Activated T-helper 1 cell treated with anti-CD3 and anti-CD28 coated beads, Interleukin-12 subunit alpha, Interleukin-12 subunit beta, Interleukin-2, Interleukin-4 antibody, amounts not matched to agents 30 ng/mL and 10 ng/mL and 1 ng/mL, durations not matched to agents 14 hours and 24 hours and 36 hours (primary cell): ENCODE measurements at regions of chr12 and their contacts with region 1.

Region 1: GRCh38 chr12:96211988-96212387 is 17.8 kb downstream of the ELK3 start:
- DNase-seq: no peak
- H3K4me3 Mint-ChIP-seq: peak overlapping the region; percentile 76
- H3K27ac Mint-ChIP-seq: peak overlapping the region; percentile 76
- H3K4me1 Mint-ChIP-seq: peaks cover 78% of the 10 kb centered on the region
- H3K27me3 Mint-ChIP-seq: no peaks in the 10 kb centered on the region

Region 2: GRCh38 chr12:95918194-95918993 is 293.6 kb before region 1 on chr12:
- intact Hi-C with region 1: loop called (anchors 1 kb)
- DNase-seq: peak; percentile 17
- H3K4me3 Mint-ChIP-seq: no peak overlapping the region
- H3K27ac Mint-ChIP-seq: no peak overlapping the region
- H3K4me1 Mint-ChIP-seq: no peaks in the 10 kb centered on the region
- H3K27me3 Mint-ChIP-seq: peaks cover 20% of the 10 kb centered on the region

Region 3: DNA sequence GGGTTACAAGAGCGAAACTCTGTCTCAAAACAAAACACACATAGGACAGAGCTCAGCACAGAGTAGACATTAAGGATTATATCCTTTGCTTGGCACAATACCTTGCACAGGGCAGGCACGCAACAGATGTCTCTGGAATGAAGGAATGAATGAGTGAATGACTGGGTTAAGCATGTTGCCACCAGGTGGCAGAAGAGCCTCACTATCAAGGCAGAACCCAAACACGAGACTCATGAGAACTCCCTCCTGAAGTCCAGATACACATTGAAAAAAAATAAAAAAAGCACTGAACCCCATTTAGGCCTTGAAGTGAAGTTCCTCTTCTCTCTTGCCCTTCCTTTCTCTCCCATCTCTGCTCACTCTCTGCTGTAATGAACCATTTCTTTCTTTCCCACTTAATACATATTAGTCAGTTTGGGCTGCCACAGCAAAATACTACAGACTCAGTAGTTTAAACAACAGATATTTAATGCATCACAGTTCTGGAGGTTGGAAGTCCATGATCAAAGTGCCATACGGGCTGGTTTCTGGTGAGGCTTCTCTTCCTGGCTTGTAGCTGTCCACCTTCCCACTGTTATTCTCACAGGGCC is 150.0 kb before region 1 on chr12:
- intact Hi-C with region 1: loop called (anchors 1 kb)
- DNase-seq: peak; percentile 58
- H3K4me3 Mint-ChIP-seq: no peak overlapping the region
- H3K27ac Mint-ChIP-seq: no peak overlapping the region
- H3K4me1 Mint-ChIP-seq: peaks cover 27% of the 10 kb centered on the region
- H3K27me3 Mint-ChIP-seq: no peaks in the 10 kb centered on the region

Region 4: GRCh38 chr12:96132819-96133218 is 79.2 kb before region 1 on chr12:
- intact Hi-C with region 1: loop called (anchors 2 kb)
- DNase-seq: no peak
- H3K4me3 Mint-ChIP-seq: no peak overlapping the region
- H3K27ac Mint-ChIP-seq: no peak overlapping the region
- H3K4me1 Mint-ChIP-seq: peaks cover 22% of the 10 kb centered on the region
- H3K27me3 Mint-ChIP-seq: peaks cover 10% of the 10 kb centered on the region

Region 5: DNA sequence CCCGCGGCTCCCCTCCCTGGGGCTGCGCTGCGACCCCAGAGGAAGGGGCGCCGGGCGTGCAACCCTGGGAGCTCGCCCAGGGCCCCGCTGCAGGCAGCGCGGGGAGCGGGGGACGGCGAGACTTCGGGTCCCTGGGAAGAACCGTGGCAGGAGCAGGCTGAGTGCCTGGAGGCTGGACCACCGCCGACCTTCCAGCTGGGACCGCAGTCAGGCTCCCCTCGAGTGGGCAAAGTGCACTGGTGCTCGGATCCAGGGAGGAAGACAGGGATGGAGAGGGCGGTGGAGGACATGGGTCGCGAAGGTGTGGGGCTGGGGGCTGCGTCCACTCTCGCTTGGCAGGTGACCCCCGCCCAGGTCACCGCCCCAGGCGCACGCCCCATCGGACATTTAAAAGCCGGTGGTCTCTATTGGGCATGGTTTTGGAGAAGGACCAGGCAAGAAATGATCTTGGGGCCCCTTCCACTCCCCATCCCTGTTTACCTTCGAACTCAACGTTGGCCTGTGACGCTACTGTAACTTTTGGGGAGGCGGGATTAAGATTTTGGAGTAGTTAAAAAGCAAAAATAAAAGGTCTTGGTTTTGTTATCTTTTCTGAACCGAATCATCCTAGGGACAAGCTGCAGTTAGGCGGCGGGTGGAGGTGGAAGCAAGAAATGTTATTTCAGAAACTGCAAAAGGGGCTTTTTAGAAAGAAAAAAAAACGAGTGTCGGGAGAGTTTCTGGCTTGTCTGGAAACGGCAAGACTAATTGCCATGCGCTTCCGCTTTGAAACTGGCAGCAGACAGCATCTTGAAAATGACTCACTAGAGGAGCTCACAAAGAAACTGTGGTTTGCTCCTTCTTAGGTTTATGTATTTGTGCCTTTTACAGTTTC is 16.8 kb before region 1 on chr12:
- intact Hi-C with region 1: loop called (anchors 1 kb)
- DNase-seq: peak; percentile 68
- H3K4me3 Mint-ChIP-seq: peak overlapping the region; percentile 96
- H3K27ac Mint-ChIP-seq: peak overlapping the region; percentile 98
- H3K4me1 Mint-ChIP-seq: peaks cover 49% of the 10 kb centered on the region
- H3K27me3 Mint-ChIP-seq: no peaks in the 10 kb centered on the region

Region 6: DNA sequence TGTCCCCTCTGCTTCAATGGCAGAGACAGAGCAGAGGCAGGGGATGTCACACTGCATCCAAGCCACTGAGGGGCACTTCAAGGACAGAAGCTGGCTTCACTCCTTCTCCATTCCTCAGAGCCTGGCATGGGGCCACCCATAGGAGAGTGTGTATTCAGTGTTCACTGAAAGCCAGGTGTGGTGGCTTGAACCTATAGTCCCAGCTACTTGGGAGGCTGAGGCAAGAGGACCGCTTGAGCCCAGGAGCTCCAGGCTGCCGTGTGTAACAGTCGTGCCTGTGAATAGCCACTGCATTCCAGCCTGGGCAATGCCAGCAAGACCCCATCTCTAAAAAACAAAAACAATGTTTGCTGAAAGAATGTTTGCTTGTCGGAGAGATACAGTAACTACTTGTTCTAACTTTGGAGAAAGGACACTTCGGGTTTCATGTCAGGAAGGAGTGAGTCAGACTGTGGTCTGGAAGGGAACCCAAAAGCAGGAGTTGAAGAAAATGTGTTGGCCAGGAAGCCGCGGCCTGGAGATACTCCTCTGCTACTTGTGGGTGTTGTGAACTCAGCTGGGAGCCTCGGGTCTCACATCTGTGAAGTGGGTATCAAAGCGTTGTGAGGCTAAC is 25.6 kb after region 1 on chr12:
- intact Hi-C with region 1: loop called (anchors 2 kb)
- DNase-seq: peak; percentile 46
- H3K4me3 Mint-ChIP-seq: peak overlapping the region; percentile 66
- H3K27ac Mint-ChIP-seq: peak overlapping the region; percentile 82
- H3K4me1 Mint-ChIP-seq: peaks cover 70% of the 10 kb centered on the region
- H3K27me3 Mint-ChIP-seq: no peaks in the 10 kb centered on the region